Ovary (tissue), 10 donors: ENCODE measurements at regions of chr10 and their contacts with region 1.

Region 1: DNA sequence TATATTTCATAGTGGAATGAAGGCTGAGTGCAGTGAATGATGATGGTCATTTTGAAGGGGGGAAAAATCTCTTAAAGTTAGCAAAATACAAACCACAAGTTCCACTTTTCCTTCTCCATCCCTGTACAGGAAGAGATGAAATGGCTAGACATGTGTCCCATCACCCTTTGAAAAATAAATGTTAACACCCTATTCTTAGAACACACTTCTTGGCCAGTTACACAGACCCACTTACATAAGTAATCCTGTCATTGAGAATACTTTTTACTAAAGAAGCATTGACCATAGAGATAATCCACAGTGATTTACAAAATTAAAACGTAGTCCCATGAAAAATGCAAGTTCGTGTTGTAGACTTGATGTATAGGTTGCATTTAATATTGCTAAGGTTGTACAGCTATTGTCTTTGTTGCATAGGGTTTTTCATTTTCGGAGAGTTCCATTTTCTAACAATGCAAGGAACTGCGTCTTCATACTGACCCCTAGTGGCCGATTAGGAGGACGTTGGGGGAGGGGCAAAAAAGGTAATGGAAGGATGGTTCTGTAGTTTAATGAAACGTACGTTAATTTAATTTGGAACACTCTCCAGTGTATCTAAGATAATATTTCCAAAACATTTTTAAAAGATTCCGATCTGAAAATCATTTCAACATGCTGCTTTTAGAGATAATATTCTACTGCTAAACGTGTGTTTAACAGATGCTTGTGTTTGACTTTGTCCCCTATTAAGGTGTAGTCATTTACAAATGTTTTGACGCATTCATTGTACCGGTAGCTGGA is 60.9 kb downstream of the ARMC3 start:
- DNase-seq: peak; percentile 12 to 61 (median 40)
- H3K4me3 ChIP-seq: no peak overlapping the region
- H3K27ac ChIP-seq: no peak overlapping the region
- H3K4me1 ChIP-seq: no peaks in the 10 kb centered on the region
- H3K27me3 ChIP-seq: no peaks in the 10 kb centered on the region
- CTCF ChIP-seq: peak; percentile 45 to 77 (median 70)
- EP300 ChIP-seq: no peak
- POLR2A ChIP-seq: no peak

Region 2: DNA sequence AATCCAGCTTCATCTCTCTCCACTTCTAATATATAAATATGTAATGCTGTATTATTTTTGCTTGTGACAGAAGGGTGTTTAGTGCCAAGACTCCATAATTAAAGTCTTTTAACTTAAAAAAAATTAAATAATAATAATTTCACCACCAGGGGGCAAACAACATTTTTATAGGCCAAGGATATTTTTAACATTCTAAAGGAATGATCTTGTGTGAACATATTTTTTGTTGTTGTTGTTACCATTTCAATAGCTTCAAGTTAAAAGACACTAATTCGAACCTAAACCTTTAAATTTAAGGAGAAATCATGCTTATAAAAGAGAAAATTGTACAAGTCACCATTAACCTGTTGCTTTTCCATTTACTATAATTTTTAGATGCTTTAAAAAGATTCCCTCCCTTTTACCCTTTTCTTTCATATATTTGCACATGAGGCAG is 977.8 kb before region 1 on chr10:
- intact Hi-C with region 1: loop called in 3 of 4 experiments (anchors 5 to 10 kb)
- DNase-seq: no peak
- H3K4me3 ChIP-seq: no peak overlapping the region
- H3K27ac ChIP-seq: no peak overlapping the region
- H3K4me1 ChIP-seq: no peaks in the 10 kb centered on the region
- H3K27me3 ChIP-seq: no peaks in the 10 kb centered on the region
- CTCF ChIP-seq: peak in 1 of 3 donors; percentile 20
- EP300 ChIP-seq: no peak
- POLR2A ChIP-seq: no peak

Region 3: DNA sequence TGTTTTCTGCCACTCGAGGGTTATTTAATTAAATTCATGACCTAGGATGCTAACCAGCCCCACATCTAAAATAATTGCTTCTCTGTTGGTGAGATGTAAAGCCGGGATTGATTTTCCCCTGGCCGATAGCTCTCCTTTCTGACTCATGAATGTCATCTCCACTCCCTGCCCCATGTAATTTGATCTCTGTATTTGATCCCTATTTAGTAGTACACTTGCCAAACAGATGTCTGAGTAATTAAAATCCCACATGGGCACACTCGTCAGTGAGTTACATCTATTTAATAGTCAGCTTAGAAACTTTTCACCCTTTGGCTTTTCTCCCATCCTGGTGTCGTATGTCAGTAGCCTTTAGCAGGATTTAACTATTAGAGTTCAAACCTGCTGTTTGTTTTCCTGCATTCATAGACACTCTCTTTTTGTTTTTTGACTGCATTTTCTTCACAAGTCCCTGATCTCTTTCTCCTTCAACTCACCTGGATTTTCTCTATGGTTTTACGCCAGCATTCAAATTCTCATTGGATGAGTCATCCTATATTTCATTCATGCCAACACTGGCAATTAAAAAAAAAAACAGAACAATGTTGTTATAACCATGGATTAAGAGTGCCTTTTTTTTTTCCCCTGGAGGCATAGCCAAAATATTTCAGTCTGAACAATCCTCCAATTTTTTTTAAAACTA is 560.7 kb before region 1 on chr10:
- intact Hi-C with region 1: loop called in 1 of 4 experiments (anchors 10 kb)
- DNase-seq: no peak
- H3K4me3 ChIP-seq: no peak overlapping the region
- H3K27ac ChIP-seq: no peak overlapping the region
- H3K4me1 ChIP-seq: no peaks in the 10 kb centered on the region
- H3K27me3 ChIP-seq: no peaks in the 10 kb centered on the region
- CTCF ChIP-seq: no peak
- EP300 ChIP-seq: no peak
- POLR2A ChIP-seq: no peak

Region 4: DNA sequence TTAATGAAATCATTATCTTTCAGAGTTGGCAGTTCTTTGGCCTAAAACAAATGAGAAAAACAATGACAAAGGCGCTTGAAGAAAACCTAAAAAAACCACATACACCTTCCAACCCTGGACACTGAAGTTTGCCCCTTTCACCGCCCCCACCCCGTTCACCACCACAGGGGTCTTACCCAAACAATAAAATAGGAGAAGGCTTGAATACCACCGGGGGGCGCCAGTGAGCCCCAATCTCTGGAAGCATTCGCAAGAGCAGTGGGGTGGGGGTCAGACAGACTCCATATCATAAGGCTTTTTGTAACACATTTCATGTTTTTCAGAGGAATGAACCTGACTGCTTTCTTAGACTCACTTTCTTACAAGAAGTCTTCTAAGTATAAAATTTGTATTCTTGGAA is 438.0 kb before region 1 on chr10:
- intact Hi-C with region 1: loop called in 1 of 4 experiments (anchors 10 kb)
- DNase-seq: peak in 4 of 5 donors; percentile 27 to 54 (median 32)
- H3K4me3 ChIP-seq: no peak overlapping the region
- H3K27ac ChIP-seq: no peak overlapping the region
- H3K4me1 ChIP-seq: peaks cover 1% of the 10 kb centered on the region
- H3K27me3 ChIP-seq: no peaks in the 10 kb centered on the region
- CTCF ChIP-seq: no peak
- EP300 ChIP-seq: no peak
- POLR2A ChIP-seq: no peak

Region 5: DNA sequence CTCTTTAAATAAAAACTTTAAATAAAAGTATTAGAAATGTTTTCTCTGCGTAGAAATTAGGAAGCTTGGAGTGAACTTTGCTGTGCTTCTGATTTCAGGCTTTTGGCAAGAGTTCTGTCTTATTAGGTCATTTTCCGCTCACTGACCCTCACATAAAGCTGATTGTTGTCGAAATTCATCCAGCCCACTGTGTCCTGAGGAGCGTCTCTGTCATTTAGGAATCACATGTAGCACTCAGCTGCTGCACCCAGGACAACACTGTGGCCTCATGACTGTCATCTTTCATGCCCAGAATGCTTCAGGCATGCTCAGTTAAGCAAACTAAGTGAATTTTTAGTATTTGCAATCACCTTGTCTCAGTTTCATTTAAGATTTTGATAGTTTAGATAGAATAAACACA is 48.8 kb after region 1 on chr10:
- intact Hi-C with region 1: no loop called
- DNase-seq: no peak
- H3K4me3 ChIP-seq: no peak overlapping the region
- H3K27ac ChIP-seq: no peak overlapping the region
- H3K4me1 ChIP-seq: no peaks in the 10 kb centered on the region
- H3K27me3 ChIP-seq: no peaks in the 10 kb centered on the region
- CTCF ChIP-seq: no peak
- EP300 ChIP-seq: no peak
- POLR2A ChIP-seq: no peak